SK-N-SH (cell line): ENCODE measurements at regions of chr1 and their contacts with region 1.

Region 1: GRCh38 chr1:61049850-61050540 is 32.4 kb upstream of the NFIA start:
- DNase-seq: peak; percentile 91
- H3K4me3 ChIP-seq: peak overlapping the region; percentile 84 to 92
- H3K27ac ChIP-seq: peak overlapping the region; percentile 54 to 92
- H3K4me1 ChIP-seq: peaks cover 0 to 6% of the 10 kb centered on the region in 2 experiments; a peak in 2 of 4 replicates
- H3K27me3 ChIP-seq: no peaks in the 10 kb centered on the region
- CTCF ChIP-seq: peak; percentile 94
- EP300 ChIP-seq: no peak; a peak in 1 of 4 replicates
- RAD21 ChIP-seq: peak; percentile 81

Region 2: DNA sequence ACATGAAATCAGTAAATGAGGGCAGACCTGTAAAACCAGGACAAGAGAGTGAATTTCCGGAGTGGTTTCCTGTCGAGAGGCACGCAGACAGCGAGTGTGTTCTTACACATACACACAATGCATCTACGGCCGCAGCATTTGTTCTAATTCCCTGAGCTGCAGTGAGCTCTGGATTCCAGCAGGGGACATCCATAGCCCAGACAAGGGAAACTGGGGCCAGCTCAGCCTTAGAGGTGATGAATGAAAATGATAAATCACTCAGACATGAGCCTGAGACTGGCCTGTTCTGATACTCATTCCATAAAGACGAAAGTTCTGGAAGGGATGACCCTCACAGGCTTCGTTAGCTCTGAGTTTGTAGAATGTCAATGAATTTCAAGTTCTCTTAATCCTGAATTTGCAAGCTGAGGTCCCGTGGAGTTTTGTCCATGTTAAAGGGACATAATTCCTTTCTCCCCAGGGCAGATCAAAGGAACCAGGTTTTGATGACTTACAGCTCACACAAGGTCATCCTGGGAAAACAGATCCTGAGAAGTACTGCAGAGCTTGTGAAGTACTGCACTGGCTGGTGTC is 768.5 kb before region 1 on chr1:
- CTCF ChIA-PET with region 1: interaction called, 15 read pairs
- POLR2A ChIA-PET with region 1: interaction called, 3 read pairs
- DNase-seq: peak; percentile 79
- H3K4me3 ChIP-seq: peak overlapping the region in 1 of 2 experiments; percentile 24; a peak in 1 of 4 replicates
- H3K27ac ChIP-seq: peak overlapping the region; percentile 61 to 98; a peak in 3 of 4 replicates
- H3K4me1 ChIP-seq: peaks cover 20 to 21% of the 10 kb centered on the region in 2 experiments
- H3K27me3 ChIP-seq: no peaks in the 10 kb centered on the region
- CTCF ChIP-seq: peak; percentile 92
- EP300 ChIP-seq: peak; percentile 17 to 64; a peak in 3 of 4 replicates
- RAD21 ChIP-seq: peak; percentile 98

Region 3: GRCh38 chr1:60813071-60813470 is 236.9 kb before region 1 on chr1:
- CTCF ChIA-PET with region 1: no interaction called
- POLR2A ChIA-PET with region 1: no interaction called
- DNase-seq: no peak
- H3K4me3 ChIP-seq: no peak overlapping the region
- H3K27ac ChIP-seq: no peak overlapping the region
- H3K4me1 ChIP-seq: peaks cover 0 to 5% of the 10 kb centered on the region in 2 experiments; a peak in 1 of 4 replicates
- H3K27me3 ChIP-seq: no peaks in the 10 kb centered on the region
- CTCF ChIP-seq: no peak
- EP300 ChIP-seq: no peak
- RAD21 ChIP-seq: no peak

Region 4: GRCh38 chr1:60978421-60979357 is 71.3 kb before region 1 on chr1:
- CTCF ChIA-PET with region 1: interaction called, 27 read pairs
- POLR2A ChIA-PET with region 1: interaction called, 3 read pairs
- DNase-seq: peak; percentile 32
- H3K4me3 ChIP-seq: no peak overlapping the region
- H3K27ac ChIP-seq: no peak overlapping the region
- H3K4me1 ChIP-seq: peaks cover 0 to 12% of the 10 kb centered on the region in 2 experiments; a peak in 3 of 4 replicates
- H3K27me3 ChIP-seq: no peaks in the 10 kb centered on the region
- CTCF ChIP-seq: peak; percentile 72
- EP300 ChIP-seq: no peak
- RAD21 ChIP-seq: peak; percentile 82

Region 5: GRCh38 chr1:61028136-61028535 is 21.9 kb before region 1 on chr1:
- CTCF ChIA-PET with region 1: interaction called, 13 read pairs
- POLR2A ChIA-PET with region 1: no interaction called
- DNase-seq: no peak
- H3K4me3 ChIP-seq: no peak overlapping the region
- H3K27ac ChIP-seq: no peak overlapping the region
- H3K4me1 ChIP-seq: peaks cover 0 to 2% of the 10 kb centered on the region in 2 experiments; a peak in 1 of 4 replicates
- H3K27me3 ChIP-seq: no peaks in the 10 kb centered on the region
- CTCF ChIP-seq: no peak
- EP300 ChIP-seq: no peak
- RAD21 ChIP-seq: no peak

Region 6: GRCh38 chr1:61104220-61104671 is 54.3 kb after region 1 on chr1:
- CTCF ChIA-PET with region 1: interaction called, 10 read pairs
- POLR2A ChIA-PET with region 1: no interaction called
- DNase-seq: no peak
- H3K4me3 ChIP-seq: no peak overlapping the region
- H3K27ac ChIP-seq: no peak overlapping the region
- H3K4me1 ChIP-seq: peaks cover 0 to 9% of the 10 kb centered on the region in 2 experiments; a peak in 2 of 4 replicates
- H3K27me3 ChIP-seq: no peaks in the 10 kb centered on the region
- CTCF ChIP-seq: no peak
- EP300 ChIP-seq: no peak
- RAD21 ChIP-seq: no peak

Region 7: GRCh38 chr1:61453111-61453961 is 403.3 kb after region 1 on chr1:
- CTCF ChIA-PET with region 1: interaction called, 20 read pairs
- POLR2A ChIA-PET with region 1: no interaction called
- DNase-seq: peak; percentile 75
- H3K4me3 ChIP-seq: peak overlapping the region; percentile 2 to 14; a peak in 3 of 4 replicates
- H3K27ac ChIP-seq: peak overlapping the region; percentile 78 to 98
- H3K4me1 ChIP-seq: peaks cover 21 to 35% of the 10 kb centered on the region in 2 experiments; a peak in 3 of 4 replicates
- H3K27me3 ChIP-seq: no peaks in the 10 kb centered on the region
- CTCF ChIP-seq: peak; percentile 85
- EP300 ChIP-seq: peak in 1 of 2 experiments; percentile 21; a peak in 1 of 4 replicates
- RAD21 ChIP-seq: peak; percentile 83